Calu3 (cell line): ENCODE measurements at regions of chr2 and their contacts with region 1.

Region 1: DNA sequence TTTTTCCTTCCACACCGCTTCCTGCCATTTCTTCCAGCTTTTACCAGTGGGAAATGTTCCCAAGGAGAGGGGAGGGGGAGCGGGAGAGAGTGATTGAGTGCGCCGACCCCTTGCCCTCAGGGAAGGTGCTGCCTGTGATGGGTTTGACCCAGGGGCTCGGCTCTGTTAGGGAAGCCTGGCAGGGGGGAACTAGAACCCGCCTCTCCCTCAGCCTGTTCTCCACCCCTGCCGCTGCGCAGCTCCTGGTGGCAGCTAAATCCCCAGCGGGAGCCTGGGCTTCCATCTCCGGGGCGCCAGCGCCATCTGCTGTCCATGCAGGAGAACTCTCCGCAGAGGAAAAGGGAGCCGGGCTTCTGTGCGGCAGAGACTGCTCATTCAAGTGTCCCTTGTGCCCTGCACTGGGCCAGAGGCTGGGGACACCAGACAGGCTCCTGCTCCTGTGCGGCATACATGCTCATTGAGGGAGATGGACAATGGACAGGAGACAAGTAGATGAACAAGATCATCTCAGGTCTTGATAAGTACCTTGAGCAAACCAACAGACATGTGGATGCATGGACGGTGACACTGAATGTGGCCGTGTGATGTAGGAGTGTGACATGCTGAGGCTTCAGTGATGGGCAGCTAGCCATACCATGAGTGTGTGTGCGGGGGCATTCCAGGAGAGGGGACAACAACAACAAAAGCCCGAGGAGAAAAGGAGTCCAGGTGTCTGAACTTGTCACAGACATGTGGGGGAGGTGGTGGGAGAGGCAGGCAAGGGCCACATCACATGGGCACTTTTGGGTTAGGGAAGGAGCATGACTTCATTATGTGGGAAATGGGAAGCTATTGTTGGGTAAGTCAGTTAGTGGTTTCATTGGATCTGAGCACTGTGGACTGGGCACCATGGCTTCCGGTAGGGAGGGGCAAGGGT is 13.3 kb downstream of the CHPF start:
- DNase-seq: peak; percentile 95
- H3K4me3 Mint-ChIP-seq: no peak overlapping the region
- H3K27ac Mint-ChIP-seq: no peak overlapping the region
- H3K4me1 Mint-ChIP-seq: peaks cover 11% of the 10 kb centered on the region
- H3K27me3 Mint-ChIP-seq: peaks cover 88% of the 10 kb centered on the region
- CTCF ChIP-seq: peak; percentile 96

Region 2: GRCh38 chr2:219378163-219378851 is 152.0 kb before region 1 on chr2:
- CTCF ChIA-PET with region 1: no interaction called
- intact Hi-C with region 1: no loop called
- DNase-seq: no peak
- H3K4me3 Mint-ChIP-seq: no peak overlapping the region
- H3K27ac Mint-ChIP-seq: no peak overlapping the region
- H3K4me1 Mint-ChIP-seq: no peaks in the 10 kb centered on the region
- H3K27me3 Mint-ChIP-seq: no peaks in the 10 kb centered on the region
- CTCF ChIP-seq: no peak

Region 3: GRCh38 chr2:219402665-219403515 is 127.4 kb before region 1 on chr2:
- CTCF ChIA-PET with region 1: interaction called, 48 read pairs
- intact Hi-C with region 1: loop called (anchors 1 kb)
- DNase-seq: peak; percentile 66
- H3K4me3 Mint-ChIP-seq: no peak overlapping the region
- H3K27ac Mint-ChIP-seq: no peak overlapping the region
- H3K4me1 Mint-ChIP-seq: peaks cover 17% of the 10 kb centered on the region
- H3K27me3 Mint-ChIP-seq: peaks cover 10% of the 10 kb centered on the region
- CTCF ChIP-seq: peak; percentile 79

Region 4: GRCh38 chr2:219430633-219431615 is 99.4 kb before region 1 on chr2:
- CTCF ChIA-PET with region 1: interaction called, 16 read pairs
- intact Hi-C with region 1: no loop called
- DNase-seq: peak; percentile 40
- H3K4me3 Mint-ChIP-seq: no peak overlapping the region
- H3K27ac Mint-ChIP-seq: no peak overlapping the region
- H3K4me1 Mint-ChIP-seq: no peaks in the 10 kb centered on the region
- H3K27me3 Mint-ChIP-seq: peaks cover 19% of the 10 kb centered on the region
- CTCF ChIP-seq: no peak

Region 5: GRCh38 chr2:219459460-219460311 is 70.6 kb before region 1 on chr2:
- CTCF ChIA-PET with region 1: interaction called, 22 read pairs
- intact Hi-C with region 1: loop called (anchors 1 kb)
- DNase-seq: peak; percentile 72
- H3K4me3 Mint-ChIP-seq: no peak overlapping the region
- H3K27ac Mint-ChIP-seq: no peak overlapping the region
- H3K4me1 Mint-ChIP-seq: peaks cover 10% of the 10 kb centered on the region
- H3K27me3 Mint-ChIP-seq: no peaks in the 10 kb centered on the region
- CTCF ChIP-seq: peak; percentile 93

Region 6: DNA sequence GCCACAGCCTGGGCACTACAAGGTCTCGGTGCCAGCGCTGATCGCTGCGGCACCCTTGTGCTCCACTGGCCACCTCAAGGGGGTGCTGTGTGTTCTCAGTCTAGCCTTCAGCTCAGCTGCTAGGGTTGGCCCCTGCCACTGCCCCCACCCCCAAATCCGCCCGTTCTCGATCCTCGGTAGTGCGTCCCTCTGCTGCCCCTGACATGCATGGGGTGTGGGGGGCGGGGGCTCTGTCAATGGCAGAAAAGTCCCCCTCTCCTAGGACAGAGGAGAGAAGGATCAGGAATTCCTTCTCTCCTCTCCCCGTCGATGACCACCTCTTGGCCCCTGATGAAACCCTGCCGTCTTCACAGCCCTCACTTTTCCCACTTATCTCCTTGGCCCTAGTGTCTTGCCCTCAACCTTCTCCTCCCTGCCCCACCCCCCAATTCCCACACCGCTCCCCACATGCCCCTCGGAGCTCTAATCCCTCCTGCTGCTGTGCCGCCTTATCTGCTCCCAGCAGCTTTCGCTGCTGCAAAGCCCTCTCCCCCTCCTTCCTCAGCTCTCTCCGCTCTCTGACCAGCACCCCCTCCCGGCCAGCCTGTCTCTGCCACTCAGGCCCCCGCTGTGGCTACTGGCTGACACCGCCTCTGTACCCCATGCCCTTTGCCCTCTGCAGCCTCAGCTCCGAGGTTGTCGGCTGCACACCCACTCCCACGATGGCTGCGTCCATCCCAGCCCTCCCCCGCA is 20.4 kb before region 1 on chr2:
- CTCF ChIA-PET with region 1: interaction called, 19 read pairs
- intact Hi-C with region 1: no loop called
- DNase-seq: peak; percentile 79
- H3K4me3 Mint-ChIP-seq: peak overlapping the region; percentile 79
- H3K27ac Mint-ChIP-seq: peak overlapping the region; percentile 72
- H3K4me1 Mint-ChIP-seq: peaks cover 29% of the 10 kb centered on the region
- H3K27me3 Mint-ChIP-seq: peaks cover 59% of the 10 kb centered on the region
- CTCF ChIP-seq: peak; percentile 72